SK-N-SH (cell line): ENCODE measurements at regions of chr7 and their contacts with region 1.

Region 1: DNA sequence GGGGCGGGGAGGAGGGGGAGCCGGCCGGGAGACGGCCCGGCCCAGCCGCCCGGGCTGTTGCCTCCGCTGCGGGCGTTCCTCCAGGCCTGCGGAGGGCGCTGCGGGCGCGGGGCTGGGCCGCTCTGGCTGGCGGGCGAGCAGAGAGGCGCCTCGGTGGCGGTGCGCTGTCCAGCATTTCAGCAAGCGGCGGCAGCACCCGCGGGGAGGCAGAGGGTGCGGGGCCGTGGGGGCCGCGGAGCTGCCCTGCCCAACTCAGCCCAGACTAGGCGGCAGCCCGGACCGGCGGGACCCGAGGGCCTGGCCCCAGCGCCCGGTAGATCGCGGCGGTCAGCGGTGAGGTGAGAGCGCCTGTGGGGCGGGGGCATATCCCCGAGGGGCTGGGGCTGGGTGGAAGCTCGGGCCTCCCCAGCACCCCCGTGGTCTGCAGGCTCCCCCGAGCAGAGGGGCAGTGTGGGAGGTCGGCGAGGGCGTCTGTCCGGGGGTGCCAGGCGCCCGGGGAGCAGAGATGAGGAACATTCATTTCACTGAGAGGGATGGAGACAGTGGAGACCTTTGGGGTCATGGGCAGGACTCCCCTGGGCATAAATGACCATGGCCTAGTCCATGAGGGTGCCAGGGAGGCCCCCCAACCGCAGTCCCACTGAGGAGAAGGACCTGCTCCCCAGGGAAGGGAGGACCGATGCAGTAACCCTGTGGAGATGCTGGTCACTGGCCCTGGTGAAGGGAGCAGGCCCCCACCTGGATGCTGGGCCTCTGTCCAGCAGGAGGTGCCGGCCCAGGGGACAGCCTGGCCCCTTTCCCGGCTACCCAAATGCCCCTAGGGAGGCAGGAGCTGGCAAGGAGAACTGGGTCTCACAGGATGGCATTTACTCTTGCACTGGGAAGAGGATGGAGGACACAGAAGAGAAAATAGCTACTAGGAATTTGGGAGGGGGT is at the start of gene SRRM3:
- DNase-seq: peak; percentile 98
- H3K4me3 ChIP-seq: peak within 1 kb of the TSS; percentile 35 to 50; a peak in 3 of 4 replicates
- H3K27ac ChIP-seq: peak within 1 kb of the TSS in 1 of 2 experiments; percentile 75; a peak in 2 of 4 replicates
- H3K4me1 ChIP-seq: peaks cover 0 to 27% of the 10 kb centered on the region in 2 experiments; a peak in 1 of 4 replicates
- H3K27me3 ChIP-seq: peaks cover 25% of the 10 kb centered on the region
- CTCF ChIP-seq: peak; percentile 61
- EP300 ChIP-seq: peak in 1 of 2 experiments; percentile 29; a peak in 1 of 4 replicates
- RAD21 ChIP-seq: peak; percentile 24; the same call in 1 of the 2 replicates
- polyA plus RNA-seq, gene SRRM3: 2.5 and 2.7 TPM in 2 replicates

Region 2: GRCh38 chr7:75596727-75597614 is 605.0 kb before region 1 on chr7:
- CTCF ChIA-PET with region 1: no interaction called
- POLR2A ChIA-PET with region 1: no interaction called
- DNase-seq: no peak
- H3K4me3 ChIP-seq: 0 out of 4 replicates have a peak overlapping the region, but pooled peaks of 1 of the 2 experiments have one; percentile 1
- H3K27ac ChIP-seq: peak overlapping the region in 1 of 2 experiments; percentile 55; a peak in 2 of 4 replicates
- H3K4me1 ChIP-seq: peaks cover 10 to 21% of the 10 kb centered on the region in 2 experiments; a peak in 3 of 4 replicates
- H3K27me3 ChIP-seq: no peaks in the 10 kb centered on the region
- CTCF ChIP-seq: no peak
- EP300 ChIP-seq: peak in 1 of 2 experiments; percentile 87; a peak in 2 of 4 replicates
- RAD21 ChIP-seq: no peak

Region 3: GRCh38 chr7:76185187-76185896 is 16.7 kb before region 1 on chr7:
- CTCF ChIA-PET with region 1: interaction called, 72 read pairs
- POLR2A ChIA-PET with region 1: interaction called, 15 read pairs
- DNase-seq: peak; percentile 83
- H3K4me3 ChIP-seq: no peak overlapping the region
- H3K27ac ChIP-seq: peak overlapping the region in 1 of 2 experiments; percentile 86; a peak in 2 of 4 replicates
- H3K4me1 ChIP-seq: peaks cover 0 to 9% of the 10 kb centered on the region in 2 experiments; a peak in 1 of 4 replicates
- H3K27me3 ChIP-seq: no peaks in the 10 kb centered on the region
- CTCF ChIP-seq: no peak
- EP300 ChIP-seq: peak in 1 of 2 experiments; percentile 43; a peak in 1 of 4 replicates
- RAD21 ChIP-seq: peak; percentile 34

Region 4: DNA sequence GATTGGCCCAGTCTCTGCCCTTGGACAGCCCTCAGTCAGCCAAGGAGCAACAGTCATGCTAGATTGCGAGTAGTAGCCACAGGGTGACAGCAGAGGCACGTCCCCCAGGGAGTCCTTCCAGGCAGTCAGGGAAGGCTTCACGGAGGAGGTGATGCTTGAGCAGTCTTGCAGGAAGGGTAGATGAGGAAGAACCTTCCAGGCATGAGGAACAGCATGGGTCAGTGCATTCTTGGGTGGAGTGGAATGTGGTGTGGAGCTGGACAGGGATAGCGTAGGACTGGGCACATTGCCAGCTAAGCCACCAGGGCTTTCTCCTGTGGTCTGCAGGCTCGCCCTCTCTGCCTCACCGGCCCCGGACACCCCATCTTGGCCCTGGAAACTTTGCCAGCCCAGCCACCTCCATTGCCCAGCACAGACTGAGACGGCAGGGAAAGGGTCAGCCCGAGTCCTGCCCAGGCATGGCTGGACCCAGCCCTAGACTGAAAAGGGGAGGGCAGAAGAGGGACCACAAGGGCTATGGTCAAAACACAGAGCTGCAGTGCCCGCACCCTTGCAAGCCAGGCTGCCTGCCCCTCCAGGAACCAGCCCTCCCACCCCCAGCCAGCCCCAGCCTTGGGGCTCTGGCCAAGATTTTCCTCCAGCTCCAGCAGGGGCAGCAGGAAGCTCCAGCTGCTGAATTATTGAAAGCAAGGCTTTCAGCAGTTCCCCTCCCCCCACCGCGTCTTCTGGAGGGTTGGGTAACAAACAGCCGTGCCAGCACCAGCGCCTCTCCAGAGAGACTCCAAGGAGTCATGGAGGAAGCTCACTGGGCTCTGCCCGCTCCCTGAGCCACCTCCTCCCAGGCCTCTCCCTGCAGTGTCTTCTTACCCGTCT is 18.4 kb after region 1 on chr7:
- CTCF ChIA-PET with region 1: interaction called, 139 read pairs
- POLR2A ChIA-PET with region 1: interaction called, 3 read pairs
- DNase-seq: peak; percentile 81
- H3K4me3 ChIP-seq: no peak overlapping the region
- H3K27ac ChIP-seq: peak overlapping the region in 1 of 2 experiments; percentile 36; a peak in 2 of 4 replicates
- H3K4me1 ChIP-seq: peaks cover 0 to 20% of the 10 kb centered on the region in 2 experiments; a peak in 1 of 4 replicates
- H3K27me3 ChIP-seq: peaks cover 28% of the 10 kb centered on the region; the same call in 1 of the 2 replicates
- CTCF ChIP-seq: no peak; the same call in 1 of the 2 replicates
- EP300 ChIP-seq: no peak; a peak in 1 of 4 replicates
- RAD21 ChIP-seq: peak; percentile 48

Region 5: DNA sequence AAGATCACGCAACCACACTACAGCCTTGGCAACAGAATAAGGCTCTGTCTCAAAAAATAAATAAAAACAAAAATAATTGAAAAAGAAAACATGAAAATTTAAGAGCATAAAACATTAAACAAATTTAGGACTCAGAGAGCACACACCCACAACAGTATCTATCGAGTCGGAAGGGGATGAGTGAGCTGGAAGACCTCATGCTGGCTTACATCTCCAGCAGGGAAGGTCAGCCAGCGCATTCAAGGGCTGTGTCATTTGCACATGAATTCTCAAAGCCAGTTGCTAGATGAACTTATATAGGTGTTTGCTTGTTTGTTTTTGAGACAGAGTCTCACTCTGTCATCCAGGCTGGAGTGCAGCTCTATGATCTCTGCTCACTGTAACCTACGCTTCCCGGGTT is 50.0 kb after region 1 on chr7:
- CTCF ChIA-PET with region 1: interaction called, 170 read pairs
- POLR2A ChIA-PET with region 1: interaction called, 5 read pairs
- DNase-seq: no peak
- H3K4me3 ChIP-seq: no peak overlapping the region
- H3K27ac ChIP-seq: peak overlapping the region in 1 of 2 experiments; percentile 87; a peak in 1 of 4 replicates
- H3K4me1 ChIP-seq: peaks cover 0 to 17% of the 10 kb centered on the region in 2 experiments; a peak in 1 of 4 replicates
- H3K27me3 ChIP-seq: no peaks in the 10 kb centered on the region
- CTCF ChIP-seq: no peak
- EP300 ChIP-seq: no peak
- RAD21 ChIP-seq: no peak

Region 6: GRCh38 chr7:76282344-76283253 is 80.6 kb after region 1 on chr7:
- CTCF ChIA-PET with region 1: interaction called, 11 read pairs
- POLR2A ChIA-PET with region 1: no interaction called
- DNase-seq: peak; percentile 60
- H3K4me3 ChIP-seq: peak overlapping the region in 1 of 2 experiments; percentile 12; a peak in 1 of 4 replicates
- H3K27ac ChIP-seq: no peak overlapping the region
- H3K4me1 ChIP-seq: peaks cover 3 to 8% of the 10 kb centered on the region in 2 experiments; a peak in 2 of 4 replicates
- H3K27me3 ChIP-seq: no peaks in the 10 kb centered on the region
- CTCF ChIP-seq: no peak
- EP300 ChIP-seq: no peak
- RAD21 ChIP-seq: no peak